Left lung (tissue), 14 donors: ENCODE measurements at regions of chr2 and their contacts with region 1.

Region 1: DNA sequence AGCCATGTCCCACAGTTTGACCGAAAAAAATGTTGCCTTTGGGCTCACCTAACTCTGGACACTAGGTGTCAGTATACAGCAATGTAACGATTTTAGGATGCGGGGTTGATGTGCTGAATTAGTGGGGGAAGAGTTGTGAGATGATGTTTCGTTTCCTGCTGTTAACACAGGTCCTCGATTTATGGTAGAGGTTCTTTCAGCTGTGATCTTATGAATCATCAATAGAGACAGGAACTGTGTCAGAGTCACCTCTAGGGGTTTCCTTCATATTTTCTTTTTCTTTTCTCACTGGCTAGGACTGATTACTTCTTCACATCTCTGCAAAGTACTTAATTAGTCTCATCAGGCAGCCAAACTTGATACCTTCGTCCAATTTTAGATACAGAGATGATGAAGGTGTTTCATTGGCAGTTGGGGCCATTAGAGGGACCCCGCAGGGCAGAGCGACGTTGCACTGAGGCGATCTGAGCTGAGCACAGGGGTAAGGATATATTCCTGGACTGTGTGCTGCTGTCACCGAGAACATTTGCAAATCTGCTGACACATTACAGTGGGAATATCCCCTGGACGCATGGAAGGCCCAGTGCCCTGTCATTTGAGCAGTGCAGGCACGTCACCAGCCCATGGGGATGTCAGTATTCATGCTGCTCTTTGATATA is 10.2 kb upstream of the MMADHC start:
- DNase-seq: peak in 2 of 4 donors; percentile 68 to 80
- ATAC-seq: peak; percentile 95
- H3K4me3 ChIP-seq: no peak overlapping the region
- H3K27ac ChIP-seq: no peak overlapping the region
- H3K4me1 ChIP-seq: peaks cover 0 to 2% of the 10 kb centered on the region in 2 donors
- H3K27me3 ChIP-seq: no peaks in the 10 kb centered on the region
- CTCF ChIP-seq: peak; percentile 65 to 76

Region 2: DNA sequence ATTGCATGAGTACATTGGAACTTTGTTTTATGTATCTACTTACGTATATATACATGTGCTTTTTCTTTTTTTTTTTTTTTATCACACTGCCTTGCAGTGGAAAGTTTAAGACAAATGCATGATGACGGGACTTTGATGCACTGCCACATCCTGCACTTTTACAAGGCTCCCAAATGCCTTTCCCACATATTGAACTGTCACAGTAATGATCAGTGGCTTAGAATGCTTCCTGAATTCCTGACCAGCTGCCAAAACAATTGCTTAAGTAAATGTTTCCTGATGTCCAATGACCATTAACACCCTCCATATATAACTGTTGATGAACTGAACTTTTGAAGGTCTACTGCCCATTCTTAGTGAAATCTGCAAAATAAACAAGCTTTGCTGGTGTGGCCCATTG is 499.1 kb before region 1 on chr2:
- intact Hi-C with region 1: no loop called
- DNase-seq: peak in 2 of 4 donors; percentile 66 to 74
- ATAC-seq: no peak
- H3K4me3 ChIP-seq: no peak overlapping the region
- H3K27ac ChIP-seq: no peak overlapping the region
- H3K4me1 ChIP-seq: no peaks in the 10 kb centered on the region
- H3K27me3 ChIP-seq: no peaks in the 10 kb centered on the region
- CTCF ChIP-seq: no peak

Region 3: GRCh38 chr2:150487537-150488429 is 890.0 kb after region 1 on chr2 and contains the start of gene RND3:
- intact Hi-C with region 1: loop called in 1 of 2 experiments (anchors 10 kb)
- DNase-seq: peak; percentile 85 to 98 (median 94)
- ATAC-seq: peak; percentile 69
- H3K4me3 ChIP-seq: peak within 1 kb of the TSS; percentile 57 to 67
- H3K27ac ChIP-seq: peak within 1 kb of the TSS; percentile 80 to 90
- H3K4me1 ChIP-seq: no peaks in the 10 kb centered on the region
- H3K27me3 ChIP-seq: peaks cover 0 to 63% of the 10 kb centered on the region in 2 donors
- CTCF ChIP-seq: peak; percentile 60 to 73
- polyA plus RNA-seq, gene RND3: 89.2 to 134 (median 109) TPM